Endothelial cell of umbilical vein (primary cell): ENCODE measurements at regions of chr1 and their contacts with region 1.

Region 1: GRCh38 chr1:207897188-207897587 is 13.7 kb downstream of the CD34 start:
- DNase-seq: peak; percentile 57
- H3K4me3 ChIP-seq: no peak overlapping the region
- H3K27ac ChIP-seq: no peak overlapping the region
- H3K4me1 ChIP-seq: peaks cover 6% of the 10 kb centered on the region
- H3K27me3 ChIP-seq: no peaks in the 10 kb centered on the region
- CTCF ChIP-seq: peak; percentile 8 to 11
- POLR2A ChIP-seq: no peak

Region 2: DNA sequence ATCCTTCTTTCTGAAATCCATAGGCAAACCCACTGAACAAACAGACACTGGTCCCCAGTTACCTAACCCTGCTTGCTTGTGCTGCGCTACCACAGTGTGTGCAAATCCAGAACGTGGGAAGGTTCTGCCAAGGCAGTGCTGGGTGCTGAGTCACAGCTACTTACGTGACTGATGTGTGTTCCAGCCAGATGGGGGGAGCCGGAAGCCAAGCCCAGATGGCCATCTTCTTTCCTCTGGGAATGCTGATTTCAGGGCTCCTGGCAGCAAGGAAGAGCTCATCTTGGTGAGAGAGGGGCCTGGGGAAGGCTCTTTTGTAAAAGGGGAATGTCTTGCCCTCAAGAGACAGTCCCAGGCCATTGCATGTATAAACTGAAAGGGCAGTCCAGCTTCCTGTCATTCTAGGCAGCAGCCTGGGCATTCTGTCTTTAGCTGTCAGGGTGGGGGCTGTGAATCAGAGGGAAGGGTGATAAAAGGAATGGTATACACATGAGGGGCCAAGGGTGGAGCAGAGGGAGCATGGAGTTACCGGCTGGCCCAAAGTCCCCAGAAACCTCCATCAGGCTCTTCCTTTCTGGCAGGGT is 91.3 kb before region 1 on chr1:
- CTCF ChIA-PET with region 1: no interaction called
- POLR2A ChIA-PET with region 1: no interaction called
- dilution Hi-C with region 1: no loop called
- intact Hi-C with region 1: no loop called
- DNase-seq: peak; percentile 87
- H3K4me3 ChIP-seq: no peak overlapping the region
- H3K27ac ChIP-seq: peak overlapping the region; percentile 83
- H3K4me1 ChIP-seq: peaks cover 23% of the 10 kb centered on the region
- H3K27me3 ChIP-seq: no peaks in the 10 kb centered on the region
- CTCF ChIP-seq: no peak
- POLR2A ChIP-seq: no peak

Region 3: GRCh38 chr1:207910591-207911354 is 13.6 kb after region 1 on chr1 and contains the start of gene CD34:
- CTCF ChIA-PET with region 1: interaction called, 23 read pairs
- POLR2A ChIA-PET with region 1: no interaction called
- dilution Hi-C with region 1: no loop called
- intact Hi-C with region 1: no loop called
- DNase-seq: peak; percentile 46
- H3K4me3 ChIP-seq: peak within 1 kb of the TSS; percentile 12 to 44 (median 21)
- H3K27ac ChIP-seq: no peak within 1 kb of the TSS
- H3K4me1 ChIP-seq: peaks cover 14% of the 10 kb centered on the region
- H3K27me3 ChIP-seq: peaks cover 9 to 16% of the 10 kb centered on the region in 2 experiments
- CTCF ChIP-seq: no peak
- POLR2A ChIP-seq: no peak
- total RNA-seq, gene CD34: 115 and 174 TPM in 2 replicates

Region 4: GRCh38 chr1:207919523-207920170 is 22.5 kb after region 1 on chr1:
- CTCF ChIA-PET with region 1: interaction called, 17 read pairs
- POLR2A ChIA-PET with region 1: no interaction called
- dilution Hi-C with region 1: no loop called
- intact Hi-C with region 1: no loop called
- DNase-seq: peak; percentile 53
- H3K4me3 ChIP-seq: no peak overlapping the region
- H3K27ac ChIP-seq: no peak overlapping the region
- H3K4me1 ChIP-seq: peaks cover 30% of the 10 kb centered on the region
- H3K27me3 ChIP-seq: no peaks in the 10 kb centered on the region
- CTCF ChIP-seq: no peak
- POLR2A ChIP-seq: no peak

Region 5: DNA sequence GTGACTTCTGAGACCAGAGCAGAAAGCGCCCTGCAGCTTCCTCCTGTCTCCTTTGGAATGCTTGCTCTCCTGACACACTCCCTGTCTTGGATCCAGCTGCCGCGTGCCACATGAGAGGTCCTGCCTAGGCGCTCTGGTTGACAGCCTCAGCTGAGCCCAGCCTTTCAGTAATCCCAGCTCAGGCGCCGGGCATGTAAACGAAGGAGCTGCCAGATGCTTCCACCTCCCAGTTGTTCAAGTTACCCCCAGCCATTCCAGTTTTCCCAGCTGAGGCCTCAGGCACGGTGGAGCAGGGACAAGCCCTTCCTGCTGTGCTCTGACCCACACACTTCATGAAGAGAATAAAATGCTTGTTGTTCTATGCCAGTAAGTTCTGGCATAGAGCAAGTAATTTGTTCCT is 28.0 kb after region 1 on chr1:
- CTCF ChIA-PET with region 1: interaction called, 17 read pairs
- POLR2A ChIA-PET with region 1: no interaction called
- dilution Hi-C with region 1: no loop called
- intact Hi-C with region 1: no loop called
- DNase-seq: peak; percentile 88
- H3K4me3 ChIP-seq: no peak overlapping the region
- H3K27ac ChIP-seq: no peak overlapping the region
- H3K4me1 ChIP-seq: peaks cover 33% of the 10 kb centered on the region
- H3K27me3 ChIP-seq: no peaks in the 10 kb centered on the region
- CTCF ChIP-seq: no peak
- POLR2A ChIP-seq: no peak

Region 6: GRCh38 chr1:207935166-207935583 is 38.0 kb after region 1 on chr1:
- CTCF ChIA-PET with region 1: interaction called, 19 read pairs
- POLR2A ChIA-PET with region 1: no interaction called
- dilution Hi-C with region 1: no loop called
- intact Hi-C with region 1: no loop called
- DNase-seq: no peak
- H3K4me3 ChIP-seq: no peak overlapping the region
- H3K27ac ChIP-seq: no peak overlapping the region
- H3K4me1 ChIP-seq: peaks cover 26% of the 10 kb centered on the region
- H3K27me3 ChIP-seq: no peaks in the 10 kb centered on the region
- CTCF ChIP-seq: no peak
- POLR2A ChIP-seq: no peak

Region 7: DNA sequence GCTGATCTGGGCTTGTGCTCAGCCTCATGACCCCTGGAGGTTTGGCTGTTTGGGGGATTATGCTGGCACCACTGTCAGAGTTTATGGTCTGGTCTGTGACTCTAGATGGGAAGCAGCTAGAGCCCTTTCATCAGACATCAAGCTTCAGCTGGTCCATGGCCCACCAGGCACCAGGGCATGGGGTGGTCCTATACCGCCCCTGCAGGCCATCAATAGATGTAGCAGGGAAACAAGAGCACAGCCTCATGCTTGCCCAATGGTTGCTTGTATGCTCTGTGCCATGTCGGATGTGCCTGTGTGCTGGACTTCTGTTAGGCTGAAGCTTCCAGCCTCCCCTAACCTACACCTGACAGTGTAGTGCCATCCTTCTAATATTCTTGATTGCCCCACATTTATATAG is 84.8 kb after region 1 on chr1:
- CTCF ChIA-PET with region 1: interaction called, 10 read pairs
- POLR2A ChIA-PET with region 1: no interaction called
- dilution Hi-C with region 1: no loop called
- intact Hi-C with region 1: no loop called
- DNase-seq: peak; percentile 25
- H3K4me3 ChIP-seq: no peak overlapping the region
- H3K27ac ChIP-seq: no peak overlapping the region
- H3K4me1 ChIP-seq: no peaks in the 10 kb centered on the region
- H3K27me3 ChIP-seq: peaks cover 17 to 24% of the 10 kb centered on the region in 2 experiments
- CTCF ChIP-seq: peak; percentile 60 to 68
- POLR2A ChIP-seq: no peak

Region 8: DNA sequence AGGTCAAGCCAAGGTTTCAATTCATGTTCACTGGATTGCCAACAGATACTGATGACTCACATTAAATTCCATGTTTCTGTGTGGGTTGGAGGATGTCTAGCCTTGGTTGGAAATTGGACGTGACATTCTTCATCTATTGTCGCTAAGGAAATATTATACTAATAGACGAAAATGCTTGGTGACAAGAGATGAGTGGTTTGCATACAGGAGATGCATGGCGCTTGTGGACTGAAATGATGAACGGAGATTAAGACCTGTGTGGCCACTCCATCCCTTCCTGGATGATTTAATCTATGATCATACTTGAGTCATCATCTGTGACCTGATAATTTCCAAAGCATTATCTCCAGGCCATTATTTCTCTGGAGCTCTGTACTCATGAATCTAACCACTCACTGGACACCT is 110.8 kb after region 1 on chr1:
- CTCF ChIA-PET with region 1: no interaction called
- POLR2A ChIA-PET with region 1: no interaction called
- dilution Hi-C with region 1: no loop called
- intact Hi-C with region 1: no loop called
- DNase-seq: peak; percentile 64
- H3K4me3 ChIP-seq: no peak overlapping the region
- H3K27ac ChIP-seq: no peak overlapping the region
- H3K4me1 ChIP-seq: peaks cover 7% of the 10 kb centered on the region
- H3K27me3 ChIP-seq: peaks cover 0 to 2% of the 10 kb centered on the region in 2 experiments
- CTCF ChIP-seq: no peak
- POLR2A ChIP-seq: no peak